ENCODE measurements at regions of chr10 and their contacts with region 1.

Region 1: DNA sequence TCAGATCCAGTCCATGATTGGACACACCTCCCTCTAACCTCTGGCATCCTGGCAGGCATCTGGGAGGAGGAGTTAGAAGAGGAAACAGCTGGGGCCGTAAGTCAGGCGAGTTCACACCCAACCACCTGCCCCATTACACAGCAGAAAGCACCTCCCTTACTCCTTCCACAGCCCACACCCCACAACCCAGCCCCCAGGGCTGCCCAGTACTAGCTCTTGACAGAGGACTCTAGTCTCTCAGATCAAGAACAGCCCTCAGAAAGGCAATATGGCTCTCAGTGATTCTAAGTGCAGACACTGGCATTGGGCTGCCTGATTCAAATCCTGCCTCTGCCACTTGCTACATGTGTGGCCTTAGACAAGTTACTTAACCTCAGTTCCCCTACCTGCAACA is 34.1 kb downstream of the KCNMA1 start:
- DNase-seq: no peak
- H3K4me3 ChIP-seq: no peak overlapping the region
- H3K27ac ChIP-seq: no peak overlapping the region
- H3K27me3 ChIP-seq: no peaks in the 10 kb centered on the region
- CTCF ChIP-seq: no peak

Region 2: DNA sequence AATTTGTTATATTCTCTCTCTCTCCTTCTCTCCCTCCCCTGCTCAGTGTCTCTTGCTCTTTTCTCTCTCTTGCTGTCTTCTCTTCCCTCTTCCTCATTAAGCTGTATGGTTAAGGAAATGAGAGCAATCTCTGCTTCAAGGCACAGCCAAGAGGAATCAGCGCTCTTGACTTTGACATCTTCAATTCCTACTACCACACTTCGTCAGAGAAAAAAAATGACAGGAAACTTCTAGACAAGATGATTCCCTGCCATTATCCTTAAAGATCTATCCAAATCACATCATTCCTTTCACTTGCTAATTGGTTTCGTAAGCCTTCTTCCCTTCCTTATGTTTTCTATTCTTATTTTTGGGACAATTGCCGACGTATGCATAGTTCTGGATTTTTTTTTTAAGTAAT is 390.9 kb before region 1 on chr10:
- CTCF ChIA-PET with region 1: no interaction called
- POLR2A ChIA-PET with region 1: no interaction called
- DNase-seq: no peak
- H3K4me3 ChIP-seq: no peak overlapping the region
- H3K27ac ChIP-seq: no peak overlapping the region
- H3K27me3 ChIP-seq: no peaks in the 10 kb centered on the region
- CTCF ChIP-seq: no peak

Region 3: DNA sequence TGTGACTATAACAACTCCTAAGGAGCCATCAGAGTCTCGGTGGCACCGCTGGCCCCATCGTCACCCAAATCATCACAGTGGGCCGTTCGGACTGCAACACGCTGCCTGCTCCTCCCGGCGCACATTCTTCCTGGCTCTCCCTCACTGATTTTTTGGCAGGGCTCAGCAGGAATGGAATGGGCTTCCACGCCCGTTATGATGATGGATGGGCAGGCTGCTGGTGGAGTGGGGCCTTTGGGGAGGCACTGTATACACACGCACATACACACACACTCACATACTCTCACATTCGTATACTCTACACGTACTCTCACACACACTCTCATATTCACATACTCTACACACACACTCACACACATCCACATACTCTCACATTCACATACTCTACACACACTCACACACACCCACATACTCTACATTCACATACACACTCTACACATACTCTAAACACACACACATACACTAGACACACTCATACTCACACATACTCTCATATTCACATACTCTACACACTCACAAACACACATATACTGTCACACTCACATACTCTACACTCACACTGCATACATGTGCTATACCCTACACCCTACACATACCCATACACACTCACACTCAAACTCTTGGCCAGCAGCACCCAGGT is 65.7 kb before region 1 on chr10:
- CTCF ChIA-PET with region 1: no interaction called
- POLR2A ChIA-PET with region 1: no interaction called
- DNase-seq: peak; percentile 24
- H3K4me3 ChIP-seq: no peak overlapping the region
- H3K27ac ChIP-seq: no peak overlapping the region
- H3K27me3 ChIP-seq: no peaks in the 10 kb centered on the region
- CTCF ChIP-seq: no peak

Region 4: DNA sequence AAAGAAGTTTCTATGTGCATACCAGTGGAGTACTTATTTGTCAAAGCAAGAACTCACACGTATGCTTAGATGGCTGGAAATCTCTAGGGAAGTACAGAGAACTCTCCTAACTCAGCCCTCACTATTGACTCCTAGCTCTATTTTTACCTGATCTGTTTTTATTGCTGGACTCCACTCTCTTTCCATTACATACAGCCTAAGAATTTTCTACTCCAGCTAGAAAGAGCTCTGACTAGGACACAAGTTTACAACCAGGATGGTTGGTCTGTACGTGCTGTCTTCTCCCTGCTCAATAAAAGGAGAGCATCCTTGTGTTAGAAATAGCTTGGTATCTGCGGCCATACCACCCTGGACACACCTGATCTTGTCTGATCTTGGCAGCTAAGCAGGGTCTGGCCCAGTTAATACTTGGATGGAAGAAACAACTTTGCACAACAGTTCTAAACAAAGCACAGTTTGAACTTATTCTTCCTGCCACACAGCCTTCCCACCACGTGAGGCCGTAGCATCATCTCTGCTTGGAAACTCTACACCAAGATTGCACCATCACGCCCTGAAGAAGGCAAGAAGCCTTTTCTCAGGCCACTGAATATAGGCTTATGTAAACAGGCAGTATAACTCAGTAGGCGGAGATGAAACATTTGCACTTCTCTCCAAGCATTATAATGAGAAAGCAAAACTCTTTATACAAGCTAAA is 16.7 kb before region 1 on chr10:
- CTCF ChIA-PET with region 1: interaction called, 3 read pairs
- POLR2A ChIA-PET with region 1: interaction called, 10 read pairs
- DNase-seq: peak; percentile 95
- H3K4me3 ChIP-seq: no peak overlapping the region
- H3K27ac ChIP-seq: peak overlapping the region; percentile 97
- H3K27me3 ChIP-seq: no peaks in the 10 kb centered on the region
- CTCF ChIP-seq: peak; percentile 31

Measured in AG04450 (cell line).